H1 (cell line): ENCODE measurements at regions of chr11 and their contacts with region 1.

Region 1: DNA sequence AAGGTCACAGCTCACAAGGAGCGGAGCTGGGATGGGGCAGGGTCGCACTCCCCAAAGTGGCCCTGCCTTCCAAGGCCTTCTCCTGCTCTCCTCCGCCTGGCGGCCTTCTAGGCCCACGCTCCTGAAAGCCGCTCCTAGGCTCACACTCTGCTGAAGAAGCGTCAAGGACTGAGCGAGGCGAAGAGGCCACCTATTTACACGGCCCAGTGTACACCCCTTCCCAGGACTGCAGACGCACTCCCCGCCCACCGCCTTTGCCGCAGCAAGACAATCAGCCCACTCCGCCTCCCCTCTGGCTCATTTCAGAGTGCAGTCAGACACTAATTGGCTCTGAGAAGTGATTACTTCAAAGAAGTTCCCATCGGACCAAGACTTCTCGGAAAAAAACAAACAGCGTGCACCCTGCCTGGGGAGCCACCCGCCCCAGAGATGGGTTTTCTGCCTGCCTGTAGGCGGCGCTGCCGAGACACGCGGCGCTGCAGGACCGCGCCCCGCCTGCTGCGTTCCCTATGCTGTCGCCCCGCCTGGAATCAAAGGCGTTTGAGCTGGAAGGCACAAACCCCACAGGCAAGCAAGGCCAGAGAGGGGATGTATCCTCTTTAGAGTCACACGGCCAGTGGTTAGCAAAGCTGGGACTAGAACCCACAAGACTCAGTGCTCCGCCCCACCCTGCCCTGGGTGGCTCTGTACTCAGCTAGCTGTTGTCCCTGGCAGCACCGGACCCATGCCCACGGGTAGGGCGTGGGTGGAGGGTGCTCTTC is 414.8 kb downstream of the BUD13 start:
- DNase-seq: peak; percentile 85 to 88
- H3K4me3 ChIP-seq: no peak overlapping the region
- H3K27ac ChIP-seq: no peak overlapping the region
- H3K4me1 ChIP-seq: peaks cover 0 to 18% (median 9%) of the 10 kb centered on the region in 4 experiments; a peak in 6 of 7 replicates
- H3K27me3 ChIP-seq: no peaks in the 10 kb centered on the region
- CTCF ChIP-seq: peak; percentile 96 to 97 (median 97)
- EP300 ChIP-seq: peak in 1 of 2 experiments; percentile 44; a peak in 1 of 3 replicates
- POLR2A ChIP-seq: no peak
- RAD21 ChIP-seq: peak; percentile 80 to 92

Region 2: DNA sequence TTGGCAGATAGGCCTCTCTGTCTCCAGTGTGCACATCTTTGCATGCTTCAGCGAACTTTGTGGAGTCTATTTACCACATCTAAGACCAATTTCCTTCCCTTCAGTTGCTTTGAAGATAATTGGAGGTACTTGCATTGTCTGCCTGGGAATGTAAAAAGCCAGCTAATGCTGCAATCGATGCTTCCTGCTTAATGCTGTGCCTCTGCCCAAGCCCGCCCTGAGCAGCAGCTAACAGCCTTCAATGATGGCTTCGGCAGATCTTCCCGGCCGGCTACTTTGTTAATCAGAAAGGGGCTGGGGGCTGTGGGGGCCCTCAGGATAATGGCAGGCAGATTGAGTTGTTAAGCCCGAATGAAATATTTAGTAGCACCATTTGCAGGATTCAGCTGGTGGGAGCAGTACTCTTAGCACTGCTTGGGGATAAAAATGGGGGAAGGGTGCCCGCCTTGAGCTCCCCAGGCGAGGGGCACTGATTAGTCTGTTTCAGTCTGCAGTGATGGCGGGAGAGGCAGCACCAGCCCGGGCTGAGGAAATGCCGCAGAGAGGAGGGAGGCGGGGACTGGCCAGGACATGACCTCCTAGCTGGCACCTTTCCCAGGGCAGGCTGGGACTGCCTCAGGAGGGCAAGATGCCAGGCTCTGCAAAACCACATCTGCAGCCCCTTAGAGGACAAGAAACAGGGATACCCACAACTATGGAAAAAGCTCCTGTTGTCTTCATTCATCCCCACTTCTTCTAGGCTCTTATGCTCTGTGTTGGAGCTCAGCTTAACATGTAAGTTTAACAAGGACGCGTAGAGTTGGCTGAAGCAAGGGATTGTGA is 45.2 kb before region 1 on chr11:
- CTCF ChIA-PET with region 1: interaction called, 10 read pairs
- POLR2A ChIA-PET with region 1: no interaction called
- DNase-seq: peak in 1 of 2 experiments; percentile 44
- H3K4me3 ChIP-seq: no peak overlapping the region
- H3K27ac ChIP-seq: no peak overlapping the region
- H3K4me1 ChIP-seq: peaks cover 0 to 8% (median under 1%) of the 10 kb centered on the region in 4 experiments; a peak in 5 of 7 replicates
- H3K27me3 ChIP-seq: no peaks in the 10 kb centered on the region
- CTCF ChIP-seq: no peak
- EP300 ChIP-seq: no peak
- POLR2A ChIP-seq: no peak
- RAD21 ChIP-seq: no peak

Region 3: GRCh38 chr11:116373104-116373944 is 15.4 kb after region 1 on chr11:
- CTCF ChIA-PET with region 1: interaction called, 41 read pairs
- POLR2A ChIA-PET with region 1: no interaction called
- DNase-seq: no peak
- H3K4me3 ChIP-seq: no peak overlapping the region
- H3K27ac ChIP-seq: no peak overlapping the region
- H3K4me1 ChIP-seq: no peaks in the 10 kb centered on the region; a peak in 1 of 7 replicates
- H3K27me3 ChIP-seq: no peaks in the 10 kb centered on the region
- CTCF ChIP-seq: no peak
- EP300 ChIP-seq: no peak
- POLR2A ChIP-seq: no peak
- RAD21 ChIP-seq: no peak

Region 4: DNA sequence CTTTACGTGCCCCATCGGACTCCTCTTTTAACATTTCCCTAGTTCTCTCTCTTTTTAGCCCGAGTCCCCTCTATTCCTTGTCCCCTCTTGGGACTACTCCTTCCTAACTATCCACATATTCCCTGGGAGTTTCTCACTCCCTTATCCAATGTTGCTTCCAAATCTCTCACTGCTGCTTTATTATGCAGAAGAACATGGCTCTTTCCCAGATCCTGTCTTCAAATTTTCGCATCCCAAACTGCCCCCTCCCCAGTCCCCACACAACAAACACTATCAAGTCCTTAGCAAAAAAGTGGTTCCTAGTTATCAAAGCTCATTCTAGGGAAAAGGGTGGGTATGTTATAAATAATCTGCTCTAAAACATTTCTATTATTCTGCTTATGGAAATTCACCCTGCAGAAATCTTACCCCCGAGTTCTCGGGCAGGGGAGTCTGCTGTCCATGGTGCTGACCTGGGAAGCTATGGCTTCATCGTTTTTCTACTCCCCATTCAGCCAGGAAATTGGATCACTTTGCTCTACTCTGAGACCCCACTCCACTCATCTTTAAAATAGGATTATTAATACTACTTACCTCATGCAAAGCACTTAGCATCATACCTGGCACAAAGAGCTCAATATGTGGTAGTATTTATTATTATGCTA is 21.3 kb after region 1 on chr11:
- CTCF ChIA-PET with region 1: interaction called, 41 read pairs
- POLR2A ChIA-PET with region 1: no interaction called
- DNase-seq: peak in 1 of 2 experiments; percentile 81
- H3K4me3 ChIP-seq: 0 out of 8 replicates have a peak overlapping the region, but pooled peaks of 1 of the 4 experiments have one; percentile 9
- H3K27ac ChIP-seq: no peak overlapping the region
- H3K4me1 ChIP-seq: peaks cover 0 to 7% (median 2%) of the 10 kb centered on the region in 4 experiments; a peak in 2 of 7 replicates
- H3K27me3 ChIP-seq: no peaks in the 10 kb centered on the region
- CTCF ChIP-seq: no peak
- EP300 ChIP-seq: no peak
- POLR2A ChIP-seq: no peak
- RAD21 ChIP-seq: no peak

Region 5: GRCh38 chr11:116420770-116421528 is 63.0 kb after region 1 on chr11:
- CTCF ChIA-PET with region 1: interaction called, 16 read pairs
- POLR2A ChIA-PET with region 1: no interaction called
- DNase-seq: no peak
- H3K4me3 ChIP-seq: no peak overlapping the region
- H3K27ac ChIP-seq: no peak overlapping the region
- H3K4me1 ChIP-seq: peaks cover 1 to 16% (median 7%) of the 10 kb centered on the region in 4 experiments; a peak in 5 of 7 replicates
- H3K27me3 ChIP-seq: no peaks in the 10 kb centered on the region
- CTCF ChIP-seq: no peak
- EP300 ChIP-seq: no peak
- POLR2A ChIP-seq: no peak
- RAD21 ChIP-seq: no peak